ENCODE measurements at regions of chr7 and their contacts with region 1.

Region 1: GRCh38 chr7:77326696-77327628 is 89.2 kb downstream of the GSAP start:
- DNase-seq: peak; percentile 46 to 68 (median 67)
- ATAC-seq: peak; percentile 50 to 61
- H3K4me3 ChIP-seq: no peak overlapping the region
- H3K27ac ChIP-seq: peak overlapping the region; percentile 53
- H3K4me1 ChIP-seq: peaks cover 17% of the 10 kb centered on the region
- H3K27me3 ChIP-seq: no peaks in the 10 kb centered on the region

Region 2: GRCh38 chr7:77247206-77247850 is 79.6 kb before region 1 on chr7:
- intact Hi-C with region 1: loop called in 3 of 4 experiments (anchors 10 kb)
- DNase-seq: peak; percentile 59 to 91 (median 83)
- ATAC-seq: no peak
- H3K4me3 ChIP-seq: no peak overlapping the region
- H3K27ac ChIP-seq: no peak overlapping the region
- H3K4me1 ChIP-seq: peaks cover 6% of the 10 kb centered on the region
- H3K27me3 ChIP-seq: no peaks in the 10 kb centered on the region

Region 3: GRCh38 chr7:77258014-77258413 is 68.9 kb before region 1 on chr7:
- intact Hi-C with region 1: loop called in 2 of 4 experiments (anchors 10 kb)
- DNase-seq: no peak
- ATAC-seq: no peak
- H3K4me3 ChIP-seq: no peak overlapping the region
- H3K27ac ChIP-seq: no peak overlapping the region
- H3K4me1 ChIP-seq: no peaks in the 10 kb centered on the region
- H3K27me3 ChIP-seq: no peaks in the 10 kb centered on the region

Region 4: DNA sequence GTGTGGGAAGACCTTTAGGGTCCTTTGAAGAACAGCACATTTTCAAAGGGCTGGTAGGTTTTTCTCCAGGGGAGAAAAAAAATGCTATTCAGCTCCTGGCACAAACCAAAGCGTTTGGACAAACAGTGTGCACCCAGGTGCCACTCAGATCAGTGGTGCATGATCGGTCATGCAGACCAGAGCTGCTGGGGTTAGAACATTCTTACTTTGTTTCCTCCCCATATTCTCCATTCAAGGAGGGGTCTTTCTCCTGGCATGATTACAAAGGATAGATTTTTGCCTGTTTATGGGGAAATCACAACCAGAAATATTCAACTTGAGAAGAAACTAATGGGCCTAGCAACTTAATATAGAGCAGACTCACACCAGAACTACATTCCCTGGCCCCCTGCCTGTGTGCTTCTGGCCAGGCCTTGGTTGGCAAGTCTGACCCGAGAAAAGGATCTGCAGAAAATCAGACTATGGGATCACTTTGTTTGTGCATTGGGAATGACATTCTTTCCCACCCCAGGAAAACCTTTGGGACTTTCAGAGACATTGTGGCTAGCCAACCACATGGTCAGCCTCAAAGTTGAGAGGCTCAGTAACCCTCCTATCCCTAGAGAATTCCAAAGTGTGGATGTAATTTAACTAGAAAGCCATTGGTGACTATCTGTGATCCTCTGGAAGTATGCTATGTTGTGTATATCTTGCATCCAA is 45.0 kb before region 1 on chr7:
- intact Hi-C with region 1: loop called in 1 of 4 experiments (anchors 2 kb)
- DNase-seq: peak; percentile 44 to 90 (median 82)
- ATAC-seq: peak; percentile 41 to 87
- H3K4me3 ChIP-seq: no peak overlapping the region
- H3K27ac ChIP-seq: no peak overlapping the region
- H3K4me1 ChIP-seq: peaks cover 2% of the 10 kb centered on the region
- H3K27me3 ChIP-seq: no peaks in the 10 kb centered on the region